Natural killer cell (primary cell): ENCODE measurements at regions of chr1 and their contacts with region 1.

Region 1: GRCh38 chr1:59046730-59047157 is 250.2 kb upstream of the FGGY start:
- DNase-seq: peak in 1 of 2 donors; percentile 73
- ATAC-seq: peak; percentile 81 to 89 (median 85)
- H3K4me3 ChIP-seq: no peak overlapping the region
- H3K4me3 Mint-ChIP-seq: peak overlapping the region; percentile 51
- H3K27ac ChIP-seq: peak overlapping the region; percentile 71
- H3K27ac Mint-ChIP-seq: peak overlapping the region; percentile 80 to 84
- H3K4me1 ChIP-seq: peaks cover 42% of the 10 kb centered on the region
- H3K4me1 Mint-ChIP-seq: peaks cover 37 to 40% of the 10 kb centered on the region in 2 donors
- H3K27me3 ChIP-seq: no peaks in the 10 kb centered on the region
- H3K27me3 Mint-ChIP-seq: peaks cover 0 to 4% of the 10 kb centered on the region in 2 donors
- CTCF ChIP-seq: peak; percentile 25

Region 2: DNA sequence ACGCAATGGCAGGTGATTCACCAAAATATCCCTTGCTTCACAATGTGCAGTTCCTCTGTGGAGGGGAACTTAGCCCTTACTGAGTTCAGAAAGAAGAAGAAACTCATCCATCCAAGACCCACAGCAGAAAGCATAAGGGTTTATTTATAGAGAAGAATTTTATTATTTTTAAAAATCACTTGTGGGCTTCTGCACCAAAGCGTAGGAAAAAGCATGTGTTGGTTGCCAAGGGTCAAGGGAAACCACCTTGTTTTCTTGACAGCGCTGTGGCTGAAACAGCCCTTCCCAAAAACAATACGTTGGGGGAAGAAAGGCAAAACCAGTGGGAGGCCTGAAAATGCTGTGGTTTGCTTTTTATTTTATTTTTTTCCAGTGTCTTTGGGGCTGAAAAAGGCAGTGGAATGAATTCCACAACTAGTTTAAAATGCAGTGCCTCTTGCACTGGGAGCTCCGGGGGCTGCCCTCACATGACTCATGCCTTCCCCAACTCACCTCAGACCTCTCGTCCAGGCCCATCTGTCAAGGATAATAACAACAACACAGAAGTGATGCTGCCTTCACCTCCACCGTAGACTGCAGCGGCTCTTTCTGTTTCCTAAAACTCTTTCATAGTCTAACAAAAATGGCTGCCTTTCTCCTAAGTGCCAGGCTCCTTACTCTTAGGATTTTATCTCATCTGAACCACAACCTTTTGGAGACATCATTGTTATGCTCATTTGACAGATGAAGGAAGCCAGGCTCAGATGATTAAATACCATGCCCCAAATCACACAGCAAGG is 38.7 kb before region 1 on chr1:
- intact Hi-C with region 1: loop called (anchors 5 kb)
- DNase-seq: no peak
- ATAC-seq: peak in 1 of 3 donors; percentile 24
- H3K4me3 ChIP-seq: no peak overlapping the region
- H3K4me3 Mint-ChIP-seq: peak overlapping the region; percentile 59
- H3K27ac ChIP-seq: peak overlapping the region; percentile 18
- H3K27ac Mint-ChIP-seq: peak overlapping the region; percentile 32 to 86
- H3K4me1 ChIP-seq: peaks cover 40% of the 10 kb centered on the region
- H3K4me1 Mint-ChIP-seq: peaks cover 49 to 58% of the 10 kb centered on the region in 2 donors
- H3K27me3 ChIP-seq: no peaks in the 10 kb centered on the region
- H3K27me3 Mint-ChIP-seq: peaks cover 0 to 12% of the 10 kb centered on the region in 2 donors
- CTCF ChIP-seq: no peak

Region 3: GRCh38 chr1:59020151-59020997 is 26.4 kb before region 1 on chr1:
- intact Hi-C with region 1: loop called (anchors 2 kb)
- DNase-seq: peak; percentile 39 to 77
- ATAC-seq: peak; percentile 84 to 94 (median 87)
- H3K4me3 ChIP-seq: peak overlapping the region; percentile 5
- H3K4me3 Mint-ChIP-seq: peak overlapping the region; percentile 85
- H3K27ac ChIP-seq: peak overlapping the region; percentile 75
- H3K27ac Mint-ChIP-seq: peak overlapping the region; percentile 90 to 93
- H3K4me1 ChIP-seq: peaks cover 29% of the 10 kb centered on the region
- H3K4me1 Mint-ChIP-seq: peaks cover 37 to 40% of the 10 kb centered on the region in 2 donors
- H3K27me3 ChIP-seq: no peaks in the 10 kb centered on the region
- H3K27me3 Mint-ChIP-seq: peaks cover 5 to 8% of the 10 kb centered on the region in 2 donors
- CTCF ChIP-seq: no peak